T-cell (primary cell): ENCODE measurements at regions of chr14 and their contacts with region 1.

Region 1: GRCh38 chr14:97206916-97207315 is 409.7 kb downstream of the VRK1 start:
- DNase-seq: no peak
- ATAC-seq: no peak
- H3K4me3 ChIP-seq: no peak overlapping the region
- H3K4me3 Mint-ChIP-seq: no peak overlapping the region
- H3K27ac ChIP-seq: no peak overlapping the region
- H3K27ac Mint-ChIP-seq: no peak overlapping the region
- H3K4me1 ChIP-seq: no peaks in the 10 kb centered on the region
- H3K4me1 Mint-ChIP-seq: no peaks in the 10 kb centered on the region
- H3K27me3 ChIP-seq: peaks cover 0 to 10% of the 10 kb centered on the region in 2 experiments
- H3K27me3 Mint-ChIP-seq: peaks cover 4 to 11% of the 10 kb centered on the region in 2 donors

Region 2: GRCh38 chr14:97306760-97307246 is 99.9 kb after region 1 on chr14:
- CTCF ChIA-PET with region 1: no interaction called
- POLR2A ChIA-PET with region 1: interaction called in 1 of 2 experiments, 11 read pairs
- DNase-seq: no peak
- ATAC-seq: peak in 3 of 4 experiments; percentile 84 to 87 (median 86)
- H3K4me3 ChIP-seq: no peak overlapping the region
- H3K4me3 Mint-ChIP-seq: no peak overlapping the region
- H3K27ac ChIP-seq: no peak overlapping the region
- H3K27ac Mint-ChIP-seq: peak overlapping the region; percentile 78 to 88
- H3K4me1 ChIP-seq: peaks cover 12 to 17% of the 10 kb centered on the region in 2 experiments
- H3K4me1 Mint-ChIP-seq: peaks cover 15 to 35% (median 33%) of the 10 kb centered on the region in 3 donors
- H3K27me3 ChIP-seq: no peaks in the 10 kb centered on the region
- H3K27me3 Mint-ChIP-seq: no peaks in the 10 kb centered on the region

Region 3: GRCh38 chr14:97806891-97807290 is 600.0 kb after region 1 on chr14:
- CTCF ChIA-PET with region 1: no interaction called
- POLR2A ChIA-PET with region 1: no interaction called
- DNase-seq: no peak
- ATAC-seq: no peak
- H3K4me3 ChIP-seq: no peak overlapping the region
- H3K4me3 Mint-ChIP-seq: no peak overlapping the region
- H3K27ac ChIP-seq: no peak overlapping the region
- H3K27ac Mint-ChIP-seq: no peak overlapping the region
- H3K4me1 ChIP-seq: no peaks in the 10 kb centered on the region
- H3K4me1 Mint-ChIP-seq: no peaks in the 10 kb centered on the region
- H3K27me3 ChIP-seq: no peaks in the 10 kb centered on the region
- H3K27me3 Mint-ChIP-seq: no peaks in the 10 kb centered on the region

Region 4: GRCh38 chr14:98130691-98131090 is 923.8 kb after region 1 on chr14:
- CTCF ChIA-PET with region 1: interaction called in 1 of 2 experiments, 12 read pairs
- POLR2A ChIA-PET with region 1: no interaction called
- DNase-seq: no peak
- ATAC-seq: no peak
- H3K4me3 ChIP-seq: no peak overlapping the region
- H3K4me3 Mint-ChIP-seq: no peak overlapping the region
- H3K27ac ChIP-seq: no peak overlapping the region
- H3K27ac Mint-ChIP-seq: no peak overlapping the region
- H3K4me1 ChIP-seq: peaks cover 14 to 19% of the 10 kb centered on the region in 2 experiments
- H3K4me1 Mint-ChIP-seq: peaks cover 27 to 43% (median 39%) of the 10 kb centered on the region in 3 donors
- H3K27me3 ChIP-seq: no peaks in the 10 kb centered on the region
- H3K27me3 Mint-ChIP-seq: no peaks in the 10 kb centered on the region